ENCODE measurements at regions of chr19 and their contacts with region 1.

Region 1: DNA sequence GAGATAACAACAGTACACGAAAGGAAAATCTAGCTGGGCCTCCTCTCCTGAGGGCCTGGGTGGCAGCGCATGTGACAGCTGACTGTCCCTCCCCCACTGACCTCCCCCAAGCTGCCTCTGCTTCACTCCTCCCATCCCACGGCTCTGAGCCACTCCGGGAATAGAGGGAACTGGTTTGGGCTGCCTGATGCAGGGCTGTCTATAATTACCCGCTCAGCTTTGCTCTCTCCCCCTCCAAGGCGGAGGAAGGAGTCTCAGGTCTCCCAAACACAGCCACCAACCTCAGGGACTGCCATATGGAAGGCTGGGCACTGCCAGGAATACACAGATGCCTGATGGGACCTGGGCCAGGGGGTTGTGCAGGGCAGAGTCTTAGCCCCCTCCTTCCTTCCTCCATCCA is 7.9 kb downstream of the NAPA start:
- DNase-seq: no peak
- H3K4me3 ChIP-seq: no peak overlapping the region
- H3K27ac ChIP-seq: no peak overlapping the region
- H3K4me1 ChIP-seq: peaks cover 21% of the 10 kb centered on the region
- H3K27me3 ChIP-seq: no peaks in the 10 kb centered on the region
- CTCF ChIP-seq: no peak

Region 2: DNA sequence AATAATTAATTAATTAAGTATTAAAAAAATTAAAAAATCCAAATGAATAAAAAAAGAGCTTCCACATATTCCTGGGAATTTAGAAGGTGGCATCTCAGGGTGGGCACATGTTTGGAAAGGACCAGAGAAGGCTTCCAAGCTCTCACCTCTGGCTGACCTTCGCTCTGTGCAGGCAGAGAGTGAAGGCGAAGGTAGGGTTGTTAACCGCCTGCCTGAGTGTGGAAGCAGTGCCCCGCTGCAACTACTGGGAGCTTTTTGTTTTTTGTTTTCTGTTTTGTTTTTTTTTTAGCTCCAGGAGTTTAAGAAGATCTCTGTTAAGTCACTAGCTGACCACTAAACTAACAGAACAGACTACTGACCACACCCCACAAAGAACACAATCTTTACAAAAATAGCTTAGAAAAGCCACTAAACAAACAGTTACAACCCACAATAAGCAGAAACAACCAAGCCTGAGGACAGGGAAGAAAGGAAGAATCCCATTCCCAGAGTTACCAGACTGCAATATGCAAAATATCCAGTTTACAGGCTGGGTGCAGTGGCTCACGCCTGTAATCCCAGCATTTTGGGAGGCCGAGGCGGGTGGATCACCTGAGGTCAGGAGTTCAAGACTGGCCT is 54.5 kb after region 1 on chr19:
- CTCF ChIA-PET with region 1: no interaction called
- dilution Hi-C with region 1: loop called (anchors 5 kb)
- in situ Hi-C with region 1: no loop called
- intact Hi-C with region 1: no loop called
- DNase-seq: no peak
- H3K4me3 ChIP-seq: no peak overlapping the region
- H3K27ac ChIP-seq: no peak overlapping the region
- H3K4me1 ChIP-seq: peaks cover 3% of the 10 kb centered on the region
- H3K27me3 ChIP-seq: no peaks in the 10 kb centered on the region
- CTCF ChIP-seq: no peak